IMR-90 (cell line): ENCODE measurements at regions of chr18 and their contacts with region 1.

Region 1: DNA sequence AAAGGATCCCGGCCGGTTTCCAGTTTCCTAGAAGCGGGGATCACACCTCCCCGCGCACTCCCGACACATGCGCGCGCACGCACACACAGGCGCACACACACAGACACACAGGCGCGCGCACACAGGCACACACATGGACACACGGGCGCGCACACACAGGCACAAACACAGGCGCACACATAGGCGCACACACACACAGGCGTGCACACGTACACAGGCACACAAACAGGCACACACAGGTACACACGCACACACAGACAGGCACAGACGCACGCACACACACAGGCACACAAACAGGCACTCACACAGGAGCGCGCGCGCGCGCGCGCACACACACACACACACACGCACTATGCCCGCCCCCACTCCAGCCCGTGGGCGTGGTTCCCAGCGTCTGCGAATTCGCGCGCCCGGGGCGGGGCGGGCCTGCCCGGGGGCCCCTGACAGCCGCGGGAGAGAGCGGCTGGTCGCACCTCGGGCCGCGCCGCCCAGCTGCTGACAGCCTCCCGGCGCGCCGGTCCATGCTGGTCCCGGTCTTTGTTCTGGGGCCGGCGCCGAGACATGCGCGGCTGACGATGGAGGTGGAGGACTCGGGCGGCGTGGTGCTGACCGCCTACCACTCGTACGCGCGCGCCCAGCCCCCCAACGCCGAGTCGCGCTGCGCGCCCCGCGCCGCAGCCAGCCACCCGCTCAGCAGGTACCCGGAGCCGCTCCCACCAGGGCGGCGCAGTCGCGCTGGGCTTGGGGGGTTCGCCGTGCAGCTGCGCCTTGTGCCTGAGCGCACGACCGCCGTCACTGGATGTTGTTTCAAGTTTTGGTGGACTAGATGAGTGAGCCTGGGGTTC is at the start of gene ARHGAP28:
- DNase-seq: peak; percentile 92
- ATAC-seq: peak; percentile 84
- H3K4me3 ChIP-seq: peak within 1 kb of the TSS; percentile 68
- H3K27ac ChIP-seq: peak within 1 kb of the TSS; percentile 96
- H3K4me1 ChIP-seq: peaks cover 4% of the 10 kb centered on the region
- H3K27me3 ChIP-seq: no peaks in the 10 kb centered on the region
- CTCF ChIP-seq: peak; percentile 34
- POLR2A ChIP-seq: peak; percentile 31; the same call in 1 of the 2 replicates
- RAD21 ChIP-seq: peak; percentile 17; the same call in 1 of the 2 replicates
- total RNA-seq, gene ARHGAP28: 2.8 and 3.8 TPM in 2 replicates

Region 2: DNA sequence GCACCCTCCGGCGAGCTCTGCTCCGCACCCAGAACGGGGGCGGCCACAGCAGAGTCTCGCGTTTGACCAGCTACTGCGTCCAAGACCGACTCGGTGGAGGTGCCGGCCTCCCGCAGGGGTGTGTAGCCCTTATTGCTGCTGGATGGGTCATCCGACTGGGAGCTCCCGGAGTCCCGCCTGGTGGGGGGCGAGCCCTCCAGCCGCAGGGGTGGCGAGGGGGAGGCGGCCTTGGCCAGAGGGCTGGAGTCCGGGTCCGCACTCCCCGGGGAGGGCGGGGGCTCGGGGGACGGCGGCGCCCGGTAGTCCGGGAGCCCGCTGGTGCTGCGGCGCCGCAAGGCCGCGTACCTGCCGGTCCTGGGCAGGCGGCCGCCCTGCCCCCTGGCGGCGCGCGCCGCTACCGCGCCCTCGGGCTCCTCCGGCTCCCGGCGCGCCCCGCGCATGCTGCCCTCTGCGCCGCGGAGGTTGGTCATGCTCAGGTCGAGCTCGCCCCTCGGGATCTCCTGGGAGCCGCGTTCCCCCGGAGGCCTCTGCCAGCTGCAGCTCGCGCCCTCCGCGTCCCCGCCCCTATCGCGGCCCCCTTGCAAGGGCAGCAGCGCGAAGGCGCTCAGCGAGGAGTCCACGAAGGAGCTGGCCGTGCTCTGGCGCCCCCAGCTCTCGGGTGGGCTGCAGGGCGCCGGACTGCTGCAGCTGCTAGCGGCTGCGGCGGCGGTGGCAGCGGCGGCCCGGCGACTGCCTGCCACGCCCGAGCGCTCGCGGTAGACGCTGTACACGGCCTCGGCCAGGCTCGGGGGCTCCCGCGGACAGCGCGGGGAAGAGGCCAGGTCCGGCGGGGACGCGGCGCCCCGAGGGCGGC is 838.9 kb before region 1 on chr18:
- CTCF ChIA-PET with region 1: no interaction called
- POLR2A ChIA-PET with region 1: no interaction called
- dilution Hi-C with region 1: no loop called
- in situ Hi-C with region 1: no loop called
- intact Hi-C with region 1: loop called (anchors 5 kb)
- DNase-seq: no peak
- ATAC-seq: no peak
- H3K4me3 ChIP-seq: peak overlapping the region; percentile 30; the same call in 1 of the 2 replicates
- H3K27ac ChIP-seq: no peak overlapping the region
- H3K4me1 ChIP-seq: peaks cover 7% of the 10 kb centered on the region; the same call in 1 of the 2 replicates
- H3K27me3 ChIP-seq: no peaks in the 10 kb centered on the region
- CTCF ChIP-seq: peak; percentile 28
- POLR2A ChIP-seq: no peak
- RAD21 ChIP-seq: no peak

Region 3: GRCh38 chr18:6561420-6561861 is 168.0 kb before region 1 on chr18:
- CTCF ChIA-PET with region 1: no interaction called
- POLR2A ChIA-PET with region 1: no interaction called
- dilution Hi-C with region 1: no loop called
- in situ Hi-C with region 1: no loop called
- intact Hi-C with region 1: loop called (anchors 5 kb)
- DNase-seq: peak; percentile 67
- ATAC-seq: peak; percentile 76
- H3K4me3 ChIP-seq: no peak overlapping the region
- H3K27ac ChIP-seq: peak overlapping the region; percentile 32; the same call in 1 of the 2 replicates
- H3K4me1 ChIP-seq: peaks cover 3% of the 10 kb centered on the region; the same call in 1 of the 2 replicates
- H3K27me3 ChIP-seq: no peaks in the 10 kb centered on the region
- CTCF ChIP-seq: no peak
- POLR2A ChIP-seq: no peak
- RAD21 ChIP-seq: no peak

Region 4: GRCh38 chr18:6679201-6679600 is 50.3 kb before region 1 on chr18:
- CTCF ChIA-PET with region 1: no interaction called
- POLR2A ChIA-PET with region 1: no interaction called
- dilution Hi-C with region 1: no loop called
- in situ Hi-C with region 1: no loop called
- intact Hi-C with region 1: loop called (anchors 1 kb)
- DNase-seq: no peak
- ATAC-seq: no peak
- H3K4me3 ChIP-seq: no peak overlapping the region
- H3K27ac ChIP-seq: no peak overlapping the region
- H3K4me1 ChIP-seq: peaks cover 1% of the 10 kb centered on the region; the same call in 1 of the 2 replicates
- H3K27me3 ChIP-seq: no peaks in the 10 kb centered on the region
- CTCF ChIP-seq: no peak
- POLR2A ChIP-seq: no peak
- RAD21 ChIP-seq: no peak

Region 5: DNA sequence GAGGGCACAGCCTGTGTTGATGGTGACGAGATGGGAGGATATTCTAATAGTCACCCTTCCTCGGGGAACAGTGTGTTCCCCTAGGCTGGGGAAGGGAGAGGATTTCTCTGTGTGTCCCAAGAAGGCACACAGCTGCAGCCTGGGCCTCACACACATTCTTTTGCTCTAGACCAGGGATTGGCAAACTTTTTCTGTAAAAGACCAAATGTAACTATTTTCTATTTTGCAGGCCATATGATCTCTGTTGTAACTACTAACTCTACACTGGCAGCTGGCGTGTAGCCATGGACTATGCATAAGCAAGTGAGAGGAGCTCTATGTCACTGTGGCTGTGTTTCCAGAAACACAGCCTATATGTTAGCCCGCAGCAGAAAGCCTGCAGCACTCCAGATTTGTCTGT is 65.8 kb after region 1 on chr18:
- CTCF ChIA-PET with region 1: no interaction called
- POLR2A ChIA-PET with region 1: interaction called, 3 read pairs
- dilution Hi-C with region 1: no loop called
- in situ Hi-C with region 1: no loop called
- intact Hi-C with region 1: loop called (anchors 5 kb)
- DNase-seq: peak; percentile 73
- ATAC-seq: peak; percentile 86
- H3K4me3 ChIP-seq: no peak overlapping the region
- H3K27ac ChIP-seq: peak overlapping the region; percentile 98; the same call in 1 of the 2 replicates
- H3K4me1 ChIP-seq: peaks cover 9% of the 10 kb centered on the region; the same call in 1 of the 2 replicates
- H3K27me3 ChIP-seq: no peaks in the 10 kb centered on the region
- CTCF ChIP-seq: no peak
- POLR2A ChIP-seq: no peak
- RAD21 ChIP-seq: no peak

Region 6: DNA sequence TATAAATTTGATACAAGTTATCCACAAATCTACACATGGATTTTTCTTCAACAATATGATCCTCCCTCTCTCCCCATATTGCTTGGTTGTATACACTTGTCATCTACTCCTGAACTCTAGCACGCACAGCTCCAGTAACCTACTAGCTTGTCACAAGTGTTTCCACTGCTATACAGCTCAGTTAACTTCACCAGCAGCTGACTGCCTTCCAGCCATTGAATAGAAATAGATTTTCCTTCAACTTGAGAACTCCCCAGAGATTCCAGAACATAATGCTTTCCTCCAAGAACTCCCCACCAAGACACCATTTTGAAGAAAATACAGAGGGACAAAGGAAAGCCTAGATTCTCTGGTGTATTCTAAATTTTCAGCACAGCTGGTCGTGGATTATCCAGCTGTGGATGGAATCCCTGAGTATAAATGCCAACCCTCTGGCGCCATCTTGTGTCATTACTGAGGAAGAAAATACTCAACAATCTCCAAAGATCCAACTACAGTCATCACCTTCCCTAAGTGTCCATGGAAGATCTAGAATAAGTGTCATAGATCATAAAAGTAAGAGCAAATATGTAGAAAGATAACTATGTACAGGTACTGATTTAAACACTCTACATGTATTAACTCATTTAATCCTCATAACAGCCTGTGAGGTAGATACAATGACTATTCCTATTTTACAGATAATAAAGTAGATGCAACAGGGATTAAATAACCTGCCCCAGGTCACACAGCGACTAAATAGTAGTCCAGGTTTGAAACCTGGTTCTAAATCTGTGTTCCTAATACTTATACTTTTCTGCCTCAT is 156.7 kb after region 1 on chr18:
- CTCF ChIA-PET with region 1: no interaction called
- POLR2A ChIA-PET with region 1: interaction called, 3 read pairs
- dilution Hi-C with region 1: no loop called
- in situ Hi-C with region 1: no loop called
- intact Hi-C with region 1: loop called (anchors 1 kb)
- DNase-seq: peak; percentile 59
- ATAC-seq: peak; percentile 83
- H3K4me3 ChIP-seq: no peak overlapping the region
- H3K27ac ChIP-seq: no peak overlapping the region; the same call in 1 of the 2 replicates
- H3K4me1 ChIP-seq: peaks cover 3% of the 10 kb centered on the region
- H3K27me3 ChIP-seq: no peaks in the 10 kb centered on the region
- CTCF ChIP-seq: peak; percentile 88
- POLR2A ChIP-seq: 0 out of 2 replicates have a peak, but pooled peaks have one; percentile 40
- RAD21 ChIP-seq: peak; percentile 97